ENCODE measurements at regions of chr9 and their contacts with region 1.

Region 1: DNA sequence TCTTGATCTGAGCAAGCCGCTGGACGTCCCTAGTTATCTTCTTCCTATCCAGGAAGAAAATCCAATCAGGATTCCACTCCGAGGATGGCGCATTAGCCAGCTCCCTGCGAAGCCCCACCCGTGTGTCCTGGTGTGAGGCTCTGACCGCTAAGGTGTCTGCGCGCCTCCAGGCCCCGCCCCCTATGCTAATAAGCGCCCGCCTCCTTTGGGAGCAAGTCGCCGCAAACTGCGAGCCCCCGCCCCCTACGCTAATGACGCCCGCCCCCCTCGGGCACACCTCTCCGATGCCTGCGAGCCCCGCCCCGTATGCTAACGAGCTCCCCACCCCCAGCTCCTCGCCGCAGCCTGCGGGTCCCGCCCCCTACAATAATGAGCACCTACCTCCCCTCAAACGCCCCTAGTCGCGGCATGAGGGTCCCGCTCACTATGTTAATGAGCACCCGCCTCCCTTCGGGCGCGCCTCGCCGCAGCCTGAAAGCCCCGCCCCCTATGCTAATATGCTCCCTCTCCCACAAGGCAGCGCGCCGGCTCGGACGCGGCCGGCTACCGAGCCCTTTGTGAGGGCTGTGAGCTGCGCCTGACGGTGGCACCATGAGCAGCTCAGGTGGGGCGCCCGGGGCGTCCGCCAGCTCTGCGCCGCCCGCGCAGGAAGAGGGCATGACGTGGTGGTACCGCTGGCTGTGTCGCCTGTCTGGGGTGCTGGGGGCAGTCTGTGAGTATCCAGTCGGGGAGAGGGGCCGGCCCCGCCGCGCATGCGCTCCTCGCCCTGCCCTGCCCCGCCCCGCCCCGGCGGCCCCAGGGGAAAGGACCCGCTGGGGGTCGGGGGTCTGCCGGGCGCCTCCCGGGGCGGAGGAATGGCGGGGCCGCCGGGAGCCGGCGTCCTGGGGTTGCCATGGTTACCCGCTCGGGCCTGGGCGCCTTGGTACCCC is at the start of gene CACFD1:
- DNase-seq: peak; percentile 95 to 97
- ATAC-seq: peak; percentile 82 to 91
- H3K4me3 ChIP-seq: peak within 1 kb of the TSS; percentile 78
- H3K27ac ChIP-seq: peak within 1 kb of the TSS; percentile 97 to 98
- H3K4me1 ChIP-seq: peaks cover 16% of the 10 kb centered on the region
- CTCF ChIP-seq: no peak
- EP300 ChIP-seq: no peak
- POLR2A ChIP-seq: peak; percentile 62
- RAD21 ChIP-seq: no peak
- polyA plus RNA-seq, gene CACFD1: 6.2 and 8.0 TPM in 2 replicates

Region 2: GRCh38 chr9:133478851-133479711 is 19.3 kb after region 1 on chr9 and contains the start of gene SLC2A6:
- CTCF ChIA-PET with region 1: interaction called, 58 read pairs
- POLR2A ChIA-PET with region 1: interaction called, 14 read pairs
- DNase-seq: peak; percentile 71 to 95
- ATAC-seq: peak; percentile 93 to 99
- H3K4me3 ChIP-seq: peak within 1 kb of the TSS; percentile 58
- H3K27ac ChIP-seq: peak within 1 kb of the TSS; percentile 73 to 96
- H3K4me1 ChIP-seq: peaks cover 12% of the 10 kb centered on the region
- CTCF ChIP-seq: no peak
- EP300 ChIP-seq: no peak
- POLR2A ChIP-seq: peak; percentile 63
- RAD21 ChIP-seq: no peak
- polyA plus RNA-seq, gene SLC2A6: 3.7 and 4.6 TPM in 2 replicates

Region 3: DNA sequence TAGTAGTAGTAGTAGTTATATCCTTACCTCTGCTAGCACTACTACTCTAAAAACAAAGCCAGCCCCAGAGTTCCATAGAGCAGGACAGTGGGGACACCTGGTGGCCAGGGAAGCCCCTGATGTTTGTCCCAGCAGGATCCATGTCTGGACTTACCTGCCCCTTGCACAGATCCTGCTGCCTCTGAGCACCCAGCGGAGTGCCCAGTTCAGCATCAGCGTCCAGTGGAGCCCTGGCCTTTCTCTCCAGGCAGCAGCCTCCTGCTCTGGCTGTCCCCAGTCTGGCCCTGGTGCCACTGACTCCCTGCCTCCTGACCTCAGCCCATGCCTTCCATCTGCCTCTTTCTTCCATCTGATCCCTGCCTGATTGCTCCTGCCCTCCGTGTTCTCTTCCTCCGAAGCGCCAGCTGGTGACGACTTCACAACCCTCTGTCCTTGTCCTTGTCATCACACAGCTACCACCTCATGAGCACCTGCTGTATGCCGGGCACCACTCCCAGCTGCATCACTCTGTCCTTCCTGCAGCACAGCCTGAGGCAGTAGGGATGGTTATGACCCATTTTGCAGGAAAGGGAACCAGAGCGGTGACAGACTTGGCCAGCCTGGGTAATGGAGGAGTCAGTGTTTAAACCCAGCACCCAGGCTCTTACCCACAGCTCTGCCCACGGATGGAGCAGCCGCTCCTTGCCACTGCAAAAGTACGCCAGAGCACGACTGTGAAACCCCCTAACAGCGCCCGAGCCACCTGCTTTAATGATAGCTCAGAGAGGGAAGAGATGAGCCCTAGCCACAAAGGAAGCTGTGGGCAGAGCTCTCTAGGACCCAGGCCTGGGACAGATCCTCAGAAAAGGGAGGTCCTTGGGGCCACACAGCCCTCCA is 266.9 kb after region 1 on chr9:
- CTCF ChIA-PET with region 1: no interaction called
- POLR2A ChIA-PET with region 1: no interaction called
- DNase-seq: peak; percentile 69 to 78
- ATAC-seq: peak; percentile 80 to 86
- H3K4me3 ChIP-seq: no peak overlapping the region
- H3K27ac ChIP-seq: no peak overlapping the region
- H3K4me1 ChIP-seq: no peaks in the 10 kb centered on the region
- CTCF ChIP-seq: peak; percentile 48; the same call in 2 of the 3 replicates
- EP300 ChIP-seq: no peak
- POLR2A ChIP-seq: no peak
- RAD21 ChIP-seq: peak; percentile 69 to 81